PC-3 (cell line): ENCODE measurements at regions of chr1 and their contacts with region 1.

Region 1: GRCh38 chr1:204837440-204838084 is 33.1 kb upstream of the NFASC start:
- DNase-seq: peak; percentile 79
- ATAC-seq: peak; percentile 84
- H3K4me3 ChIP-seq: no peak overlapping the region
- H3K27ac ChIP-seq: no peak overlapping the region
- H3K4me1 ChIP-seq: no peaks in the 10 kb centered on the region
- H3K27me3 ChIP-seq: peaks cover 29% of the 10 kb centered on the region
- CTCF ChIP-seq: no peak

Region 2: DNA sequence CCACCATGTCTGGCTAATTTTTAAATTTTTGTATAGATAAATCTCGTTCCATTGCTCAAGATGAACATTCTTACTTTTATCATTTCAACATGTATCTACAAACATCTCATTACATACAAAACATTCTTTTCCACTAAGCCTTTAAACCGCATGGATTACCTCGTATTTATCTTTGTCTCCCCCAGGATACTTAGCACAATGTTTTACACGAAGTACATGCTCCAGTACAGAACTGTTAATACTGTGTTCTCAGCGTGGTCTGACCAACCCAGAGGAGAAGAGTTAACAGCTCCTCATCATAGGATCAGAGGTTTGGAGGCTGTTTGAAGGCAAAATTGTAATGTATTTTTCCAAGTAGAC is 350.3 kb before region 1 on chr1:
- CTCF ChIA-PET with region 1: no interaction called
- POLR2A ChIA-PET with region 1: no interaction called
- intact Hi-C with region 1: no loop called
- DNase-seq: no peak
- ATAC-seq: no peak
- H3K4me3 ChIP-seq: no peak overlapping the region
- H3K27ac ChIP-seq: no peak overlapping the region
- H3K4me1 ChIP-seq: peaks cover 8% of the 10 kb centered on the region
- H3K27me3 ChIP-seq: no peaks in the 10 kb centered on the region
- CTCF ChIP-seq: no peak

Region 3: GRCh38 chr1:204516180-204516879 is 321.2 kb before region 1 on chr1 and contains the start of gene MDM4:
- CTCF ChIA-PET with region 1: no interaction called
- POLR2A ChIA-PET with region 1: no interaction called
- intact Hi-C with region 1: no loop called
- DNase-seq: peak; percentile 100
- ATAC-seq: peak; percentile 98
- H3K4me3 ChIP-seq: peak within 1 kb of the TSS; percentile 69
- H3K27ac ChIP-seq: peak within 1 kb of the TSS; percentile 86
- H3K4me1 ChIP-seq: peaks cover 14% of the 10 kb centered on the region
- H3K27me3 ChIP-seq: no peaks in the 10 kb centered on the region
- CTCF ChIP-seq: no peak
- total RNA-seq, gene MDM4: 36.3 and 55.7 TPM in 2 replicates

Region 4: GRCh38 chr1:204647114-204647804 is 190.3 kb before region 1 on chr1:
- CTCF ChIA-PET with region 1: no interaction called
- POLR2A ChIA-PET with region 1: no interaction called
- intact Hi-C with region 1: loop called (anchors 1 kb)
- DNase-seq: peak; percentile 94
- ATAC-seq: peak; percentile 96
- H3K4me3 ChIP-seq: peak overlapping the region; percentile 15; the same call in 1 of the 2 replicates
- H3K27ac ChIP-seq: peak overlapping the region; percentile 63
- H3K4me1 ChIP-seq: peaks cover 10% of the 10 kb centered on the region
- H3K27me3 ChIP-seq: no peaks in the 10 kb centered on the region
- CTCF ChIP-seq: no peak

Region 5: GRCh38 chr1:204826970-204827369 is 10.6 kb before region 1 on chr1:
- CTCF ChIA-PET with region 1: no interaction called
- POLR2A ChIA-PET with region 1: no interaction called
- intact Hi-C with region 1: no loop called
- DNase-seq: peak; percentile 48
- ATAC-seq: no peak
- H3K4me3 ChIP-seq: no peak overlapping the region
- H3K27ac ChIP-seq: no peak overlapping the region
- H3K4me1 ChIP-seq: no peaks in the 10 kb centered on the region
- H3K27me3 ChIP-seq: peaks cover 77% of the 10 kb centered on the region
- CTCF ChIP-seq: peak; percentile 68